ENCODE measurements at regions of chr12 and their contacts with region 1.

Region 1: DNA sequence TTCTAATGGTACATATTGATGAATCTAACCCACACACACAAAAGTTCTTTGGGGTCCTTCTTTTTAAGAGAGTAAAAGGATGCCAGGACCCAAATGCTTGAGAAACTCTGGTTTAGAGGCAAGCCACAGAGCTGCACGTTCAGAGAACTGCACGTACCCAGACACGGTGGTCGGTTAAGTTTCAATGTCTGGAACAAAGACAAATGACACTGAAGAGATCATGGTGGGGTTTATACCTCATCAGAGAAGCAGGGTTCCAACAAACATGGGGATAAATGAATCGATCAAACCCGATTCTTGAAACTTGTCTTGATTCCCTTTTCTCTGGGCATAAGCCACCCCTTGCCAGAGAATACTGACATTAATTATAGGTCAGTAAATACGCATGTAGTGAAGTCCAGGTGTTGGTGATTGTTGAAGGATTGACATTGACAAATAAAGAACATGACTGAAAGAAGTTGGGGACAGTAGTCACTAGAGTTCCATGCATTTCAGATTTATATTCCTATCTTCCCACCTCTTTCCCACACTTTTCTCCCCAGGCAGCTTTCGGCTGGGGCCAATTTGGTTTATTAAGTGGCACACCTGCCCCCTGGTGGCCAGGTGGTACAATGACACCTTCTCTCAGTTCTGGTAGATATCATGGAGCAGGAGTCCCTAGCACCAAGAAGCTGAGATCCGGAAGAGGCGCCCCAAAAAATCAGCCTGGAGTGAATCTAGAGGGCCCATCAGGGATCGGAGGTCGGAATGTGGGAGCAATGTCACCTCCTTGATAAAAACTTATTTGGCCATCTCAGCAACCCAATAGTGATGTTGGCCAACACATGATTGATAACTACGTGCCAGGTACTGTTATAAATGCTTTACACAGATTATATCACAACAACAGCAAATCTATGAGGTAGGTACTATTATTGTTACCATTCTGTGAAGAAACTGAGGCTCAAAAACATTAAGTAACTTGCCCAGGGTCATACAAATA is 17.8 kb upstream of the HDAC7 start:
- H3K4me3 ChIP-seq: no peak overlapping the region
- H3K27ac ChIP-seq: no peak overlapping the region
- H3K4me1 ChIP-seq: no peaks in the 10 kb centered on the region
- CTCF ChIP-seq: peak; percentile 67; the same call in 1 of the 2 replicates

Region 2: DNA sequence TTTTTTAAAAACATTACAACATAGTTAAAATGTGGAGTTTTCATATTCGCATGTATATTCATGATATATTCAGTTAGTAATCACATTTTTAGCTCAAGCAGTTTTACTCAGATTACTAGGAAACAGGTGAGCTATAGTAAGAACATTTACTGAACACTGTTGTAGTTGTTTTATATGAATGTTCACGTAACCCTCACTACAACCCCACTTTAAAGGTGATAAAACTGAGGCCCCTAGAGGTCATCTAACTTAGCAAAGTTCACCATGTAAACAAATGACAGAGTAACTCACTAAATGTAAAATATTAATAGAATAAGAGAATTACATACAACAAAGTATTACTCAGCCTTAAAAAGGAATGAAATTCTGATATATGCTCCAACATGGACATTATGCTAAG is 157.7 kb before region 1 on chr12:
- CTCF ChIA-PET with region 1: no interaction called
- POLR2A ChIA-PET with region 1: no interaction called
- H3K4me3 ChIP-seq: no peak overlapping the region
- H3K27ac ChIP-seq: no peak overlapping the region
- H3K4me1 ChIP-seq: no peaks in the 10 kb centered on the region
- CTCF ChIP-seq: no peak

Region 3: DNA sequence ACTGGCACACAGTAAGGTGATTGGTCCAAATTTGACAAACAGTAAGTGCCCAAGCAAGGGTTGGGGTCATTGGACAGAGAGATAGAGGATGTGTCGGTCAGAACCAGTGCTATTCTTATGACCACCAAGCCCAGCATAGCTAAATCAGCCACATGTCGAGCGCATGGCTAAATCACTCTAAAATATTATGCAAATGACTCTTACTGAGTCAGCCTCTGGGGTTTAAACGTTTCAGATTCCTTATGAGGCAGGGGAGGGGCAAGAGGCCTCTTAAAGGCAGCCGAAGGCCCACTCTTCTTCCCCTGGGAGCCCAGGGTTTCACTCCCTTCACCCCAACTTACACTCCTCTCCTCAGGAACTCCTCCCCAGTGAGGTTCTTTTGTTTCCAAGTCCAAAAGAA is 111.6 kb before region 1 on chr12:
- CTCF ChIA-PET with region 1: interaction called, 13 read pairs
- POLR2A ChIA-PET with region 1: no interaction called
- H3K4me3 ChIP-seq: no peak overlapping the region
- H3K27ac ChIP-seq: no peak overlapping the region
- H3K4me1 ChIP-seq: no peaks in the 10 kb centered on the region
- CTCF ChIP-seq: no peak

Region 4: GRCh38 chr12:47767216-47767724 is 70.2 kb before region 1 on chr12:
- CTCF ChIA-PET with region 1: interaction called, 182 read pairs
- POLR2A ChIA-PET with region 1: no interaction called
- H3K4me3 ChIP-seq: no peak overlapping the region
- H3K27ac ChIP-seq: no peak overlapping the region
- H3K4me1 ChIP-seq: no peaks in the 10 kb centered on the region; the same call in 1 of the 2 replicates
- CTCF ChIP-seq: 0 out of 2 replicates have a peak, but pooled peaks have one; percentile 18

Region 5: DNA sequence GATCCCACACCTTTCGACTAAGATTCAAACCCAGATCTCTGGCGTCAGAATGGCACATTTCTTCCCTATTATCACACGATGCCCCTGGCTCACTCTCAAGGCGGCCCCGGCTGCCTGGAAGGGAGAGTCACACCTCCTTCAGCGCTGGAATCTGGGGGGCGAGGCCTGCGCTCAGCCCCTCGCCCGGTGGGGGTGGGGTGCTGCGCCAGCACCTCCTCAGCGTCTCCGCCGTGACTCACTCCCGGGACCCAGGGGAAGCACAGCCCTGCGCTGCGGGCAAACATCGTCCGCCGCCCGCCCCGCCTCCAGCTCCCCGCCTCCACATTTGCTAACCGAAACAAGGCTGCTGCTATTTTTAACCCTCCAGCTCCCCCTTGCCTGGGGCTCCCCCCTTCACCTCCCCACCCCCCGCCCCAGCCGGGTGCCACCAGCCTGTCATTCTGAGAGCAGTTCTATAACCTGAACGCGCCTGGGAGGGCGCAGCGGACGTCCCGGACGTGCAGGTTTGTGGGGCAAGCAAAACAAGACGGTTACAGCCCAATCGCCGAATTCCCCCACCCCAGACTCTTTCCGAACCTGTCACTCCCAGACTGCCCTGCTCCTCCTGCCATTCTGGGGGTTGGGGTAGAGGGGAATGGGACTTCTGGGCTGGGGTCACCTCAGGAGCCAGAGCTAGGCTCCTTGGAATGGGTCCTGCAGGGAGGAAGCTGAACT is 24.5 kb before region 1 on chr12:
- CTCF ChIA-PET with region 1: interaction called, 234 read pairs
- POLR2A ChIA-PET with region 1: interaction called, 10 read pairs
- H3K4me3 ChIP-seq: peak overlapping the region; percentile 28
- H3K27ac ChIP-seq: peak overlapping the region; percentile 66
- H3K4me1 ChIP-seq: peaks cover 27% of the 10 kb centered on the region
- CTCF ChIP-seq: no peak

Region 6: DNA sequence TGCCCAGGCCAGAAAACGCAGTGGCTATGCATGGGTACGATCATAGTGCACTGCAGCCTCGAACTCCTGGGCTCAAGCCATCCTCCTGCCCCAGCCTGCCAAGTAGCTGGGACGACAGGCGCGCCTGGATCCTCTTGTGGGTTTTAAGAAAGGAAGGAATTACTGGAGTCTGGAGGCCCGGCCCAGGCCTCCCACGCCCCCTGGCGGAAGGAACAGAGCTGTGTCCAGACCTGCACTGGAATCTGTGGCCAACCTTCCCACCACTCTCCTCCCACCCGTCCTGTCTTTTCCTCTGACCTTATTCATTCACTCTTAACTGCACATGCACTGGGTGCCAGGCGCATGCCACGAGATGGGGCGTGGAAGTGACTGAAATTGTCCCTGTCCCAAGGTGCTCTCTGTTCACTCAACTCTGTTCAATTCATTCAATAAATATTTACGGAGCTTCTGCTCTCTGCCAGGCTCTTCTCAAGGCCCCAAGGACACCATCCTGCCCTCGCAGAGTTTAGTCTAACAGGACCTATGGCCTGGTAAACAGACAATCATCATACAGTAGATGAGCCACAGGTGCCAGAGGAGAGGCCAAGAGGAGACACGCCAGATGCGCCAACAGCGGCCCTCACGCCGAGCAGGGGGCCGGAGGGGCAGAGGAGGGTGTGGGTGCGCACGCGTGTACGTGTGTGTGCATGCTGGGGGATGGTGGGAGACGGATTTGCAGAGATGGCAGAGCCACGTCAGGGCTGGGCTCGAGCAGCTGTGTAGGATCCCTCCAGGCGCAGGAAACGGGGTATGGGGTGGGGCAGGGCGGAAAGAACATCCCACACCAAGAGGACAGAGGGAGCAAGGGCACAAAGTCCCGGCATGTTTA is 112.2 kb after region 1 on chr12:
- CTCF ChIA-PET with region 1: interaction called, 45 read pairs
- POLR2A ChIA-PET with region 1: interaction called, 4 read pairs
- H3K4me3 ChIP-seq: no peak overlapping the region
- H3K27ac ChIP-seq: no peak overlapping the region
- H3K4me1 ChIP-seq: no peaks in the 10 kb centered on the region; the same call in 1 of the 2 replicates
- CTCF ChIP-seq: peak; percentile 87